SK-N-SH (cell line): ENCODE measurements at regions of chr12 and their contacts with region 1.

Region 1: DNA sequence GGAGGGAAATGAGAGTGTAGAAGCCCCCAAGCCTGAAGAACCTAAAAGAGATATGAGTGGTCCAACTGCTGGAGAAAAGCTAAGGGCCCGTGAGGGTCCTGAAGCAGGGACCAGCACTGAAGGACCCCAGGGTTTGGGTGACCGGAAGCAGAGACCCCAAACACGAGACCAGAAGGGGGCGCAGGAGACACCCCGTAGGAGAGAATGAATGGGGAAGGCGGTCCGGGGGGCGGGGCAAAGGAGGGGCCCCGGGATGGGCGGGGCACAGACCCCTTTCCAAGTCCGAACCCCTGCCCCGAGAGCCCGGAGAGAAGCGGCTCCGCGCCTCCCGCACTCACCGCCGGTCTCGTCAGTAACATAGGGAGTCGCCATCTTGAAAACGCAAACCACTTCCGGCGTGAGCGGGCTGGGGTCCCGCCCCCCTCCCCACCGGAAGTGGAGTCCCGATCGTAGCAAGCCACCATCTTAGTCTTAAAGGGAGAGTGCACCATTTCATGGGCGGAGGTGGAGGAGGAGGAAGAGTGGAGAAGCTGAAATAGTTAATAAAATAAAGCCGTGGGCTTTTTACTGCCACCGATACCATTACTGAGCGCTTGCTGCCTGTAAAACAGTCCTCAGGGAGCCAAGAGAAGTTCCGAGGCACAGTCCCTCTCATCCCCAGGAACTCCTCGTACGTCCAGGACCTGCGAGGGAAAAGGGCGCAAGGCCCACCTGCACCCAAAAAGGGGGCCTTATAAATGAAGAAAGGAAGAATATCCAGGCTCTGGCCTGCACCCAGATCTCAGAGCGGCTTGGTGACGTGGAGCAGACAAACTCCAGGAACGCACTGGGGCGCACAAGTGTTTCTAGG is 731 bp downstream of the PYM1 start:
- DNase-seq: peak; percentile 96
- H3K4me3 ChIP-seq: peak overlapping the region; percentile 90 to 94
- H3K27ac ChIP-seq: peak overlapping the region; percentile 94 to 98
- H3K4me1 ChIP-seq: peaks cover 21 to 28% of the 10 kb centered on the region in 2 experiments; a peak in 3 of 4 replicates
- H3K27me3 ChIP-seq: no peaks in the 10 kb centered on the region
- CTCF ChIP-seq: peak; percentile 97
- EP300 ChIP-seq: no peak
- RAD21 ChIP-seq: no peak; the same call in 1 of the 2 replicates

Region 2: GRCh38 chr12:55728939-55729823 is 197.8 kb before region 1 on chr12 and contains the start of gene CD63:
- CTCF ChIA-PET with region 1: interaction called, 11 read pairs
- POLR2A ChIA-PET with region 1: no interaction called
- DNase-seq: peak; percentile 93
- H3K4me3 ChIP-seq: peak within 1 kb of the TSS; percentile 74 to 97
- H3K27ac ChIP-seq: peak within 1 kb of the TSS; percentile 97 to 100
- H3K4me1 ChIP-seq: peaks cover 0 to 26% of the 10 kb centered on the region in 2 experiments; a peak in 1 of 4 replicates
- H3K27me3 ChIP-seq: no peaks in the 10 kb centered on the region
- CTCF ChIP-seq: no peak
- EP300 ChIP-seq: peak in 1 of 2 experiments; percentile 6; a peak in 1 of 4 replicates
- RAD21 ChIP-seq: no peak
- polyA plus RNA-seq, gene CD63: 1,022 and 1,465 TPM in 2 replicates

Region 3: DNA sequence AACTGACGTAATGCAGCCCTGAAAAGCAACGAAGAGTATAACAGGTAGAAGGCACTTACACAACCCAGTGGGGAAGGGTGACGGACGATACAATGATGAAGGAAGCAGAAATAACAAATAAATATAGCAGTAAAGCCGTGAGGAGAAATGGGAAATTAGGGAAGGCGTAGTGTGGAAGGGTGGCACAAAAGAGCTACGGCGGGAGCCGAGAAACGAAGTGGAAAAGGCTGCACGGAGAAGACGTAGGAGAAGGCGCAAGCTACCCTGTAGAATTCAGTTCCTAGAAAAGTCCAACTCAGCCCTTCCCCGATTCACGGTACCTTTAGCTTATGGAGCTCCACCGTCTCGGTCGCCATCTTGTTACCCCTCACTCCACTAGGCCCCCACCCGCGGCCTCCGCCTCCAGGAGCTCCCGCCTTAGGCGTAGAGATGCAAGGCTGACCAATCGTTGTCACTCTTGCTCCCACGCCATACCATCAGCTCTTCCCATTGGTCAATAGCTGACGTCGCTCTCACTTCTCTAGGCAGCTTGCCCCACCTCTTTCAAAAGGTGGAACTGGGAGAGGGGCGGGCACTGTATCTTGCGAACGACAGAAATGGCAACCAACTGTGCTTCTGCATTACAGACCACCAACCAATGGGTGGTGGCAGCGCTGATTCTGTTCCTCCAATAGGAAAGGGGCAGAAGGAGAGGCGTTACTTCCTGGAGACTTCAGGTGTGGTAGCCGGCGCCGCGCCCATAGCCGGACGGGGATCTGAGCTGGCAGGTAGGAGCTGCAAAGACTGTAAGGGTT is 109.4 kb before region 1 on chr12 and contains the starts of genes ORMDL2 and SARNP:
- CTCF ChIA-PET with region 1: interaction called, 5 read pairs
- POLR2A ChIA-PET with region 1: interaction called, 18 read pairs
- DNase-seq: peak; percentile 91
- H3K4me3 ChIP-seq: peak within 1 kb of the TSS; percentile 87 to 96
- H3K27ac ChIP-seq: peak within 1 kb of the TSS; percentile 76 to 85
- H3K4me1 ChIP-seq: peaks cover 8 to 11% of the 10 kb centered on the region in 2 experiments
- H3K27me3 ChIP-seq: no peaks in the 10 kb centered on the region
- CTCF ChIP-seq: no peak
- EP300 ChIP-seq: no peak
- RAD21 ChIP-seq: no peak
- polyA plus RNA-seq, gene ORMDL2: 35.2 and 37.3 TPM in 2 replicates
- polyA plus RNA-seq, gene SARNP: 65.8 and 66.9 TPM in 2 replicates

Region 4: GRCh38 chr12:55829967-55830600 is 96.9 kb before region 1 on chr12:
- CTCF ChIA-PET with region 1: interaction called, 36 read pairs
- POLR2A ChIA-PET with region 1: interaction called, 39 read pairs
- DNase-seq: peak; percentile 79
- H3K4me3 ChIP-seq: peak overlapping the region; percentile 89 to 92
- H3K27ac ChIP-seq: peak overlapping the region; percentile 84
- H3K4me1 ChIP-seq: peaks cover 4 to 45% of the 10 kb centered on the region in 2 experiments; a peak in 3 of 4 replicates
- H3K27me3 ChIP-seq: no peaks in the 10 kb centered on the region
- CTCF ChIP-seq: no peak
- EP300 ChIP-seq: no peak; a peak in 1 of 4 replicates
- RAD21 ChIP-seq: peak; percentile 39; the same call in 1 of the 2 replicates

Region 5: GRCh38 chr12:55915482-55915859 is 11.5 kb before region 1 on chr12:
- CTCF ChIA-PET with region 1: interaction called, 16 read pairs
- POLR2A ChIA-PET with region 1: interaction called, 3 read pairs
- DNase-seq: no peak
- H3K4me3 ChIP-seq: no peak overlapping the region
- H3K27ac ChIP-seq: no peak overlapping the region
- H3K4me1 ChIP-seq: 0 out of 4 replicates have a peak, but pooled peaks cover 0 to 7% of the 10 kb centered on the region in 2 experiments
- H3K27me3 ChIP-seq: no peaks in the 10 kb centered on the region
- CTCF ChIP-seq: no peak
- EP300 ChIP-seq: no peak
- RAD21 ChIP-seq: no peak

Region 6: DNA sequence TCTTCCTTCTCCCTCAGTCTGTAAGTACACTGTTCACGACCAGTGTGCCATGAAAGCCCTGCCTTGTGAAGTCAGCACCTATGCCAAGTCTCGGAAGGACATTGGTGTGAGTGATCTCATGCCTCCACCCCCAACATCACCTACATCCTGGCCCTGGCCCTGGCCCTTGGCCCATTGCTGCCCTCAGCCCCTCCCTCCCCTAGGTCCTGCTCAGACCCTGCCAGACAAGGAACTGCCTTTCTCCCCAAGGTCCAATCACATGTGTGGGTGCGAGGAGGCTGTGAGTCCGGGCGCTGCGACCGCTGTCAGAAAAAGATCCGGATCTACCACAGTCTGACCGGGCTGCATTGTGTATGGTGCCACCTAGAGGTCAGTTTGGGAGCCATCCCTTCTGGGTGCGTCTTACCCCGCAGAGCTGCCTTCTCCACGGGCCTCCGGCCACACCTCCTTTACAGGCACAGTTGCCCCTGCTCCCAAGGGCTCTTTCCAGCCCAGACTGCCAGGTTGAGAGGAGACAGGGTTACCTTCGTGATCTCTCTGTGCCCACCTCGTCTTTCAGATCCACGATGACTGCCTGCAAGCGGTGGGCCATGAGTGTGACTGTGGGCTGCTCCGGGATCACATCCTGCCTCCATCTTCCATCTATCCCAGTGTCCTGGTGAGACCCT is 13.2 kb after region 1 on chr12:
- CTCF ChIA-PET with region 1: interaction called, 37 read pairs
- POLR2A ChIA-PET with region 1: no interaction called
- DNase-seq: peak; percentile 90
- H3K4me3 ChIP-seq: no peak overlapping the region; a peak in 1 of 4 replicates
- H3K27ac ChIP-seq: peak overlapping the region in 1 of 2 experiments; percentile 2; a peak in 1 of 4 replicates
- H3K4me1 ChIP-seq: peaks cover 0 to 9% of the 10 kb centered on the region in 2 experiments; a peak in 1 of 4 replicates
- H3K27me3 ChIP-seq: no peaks in the 10 kb centered on the region
- CTCF ChIP-seq: peak; percentile 90
- EP300 ChIP-seq: no peak
- RAD21 ChIP-seq: peak; percentile 86

Region 7: DNA sequence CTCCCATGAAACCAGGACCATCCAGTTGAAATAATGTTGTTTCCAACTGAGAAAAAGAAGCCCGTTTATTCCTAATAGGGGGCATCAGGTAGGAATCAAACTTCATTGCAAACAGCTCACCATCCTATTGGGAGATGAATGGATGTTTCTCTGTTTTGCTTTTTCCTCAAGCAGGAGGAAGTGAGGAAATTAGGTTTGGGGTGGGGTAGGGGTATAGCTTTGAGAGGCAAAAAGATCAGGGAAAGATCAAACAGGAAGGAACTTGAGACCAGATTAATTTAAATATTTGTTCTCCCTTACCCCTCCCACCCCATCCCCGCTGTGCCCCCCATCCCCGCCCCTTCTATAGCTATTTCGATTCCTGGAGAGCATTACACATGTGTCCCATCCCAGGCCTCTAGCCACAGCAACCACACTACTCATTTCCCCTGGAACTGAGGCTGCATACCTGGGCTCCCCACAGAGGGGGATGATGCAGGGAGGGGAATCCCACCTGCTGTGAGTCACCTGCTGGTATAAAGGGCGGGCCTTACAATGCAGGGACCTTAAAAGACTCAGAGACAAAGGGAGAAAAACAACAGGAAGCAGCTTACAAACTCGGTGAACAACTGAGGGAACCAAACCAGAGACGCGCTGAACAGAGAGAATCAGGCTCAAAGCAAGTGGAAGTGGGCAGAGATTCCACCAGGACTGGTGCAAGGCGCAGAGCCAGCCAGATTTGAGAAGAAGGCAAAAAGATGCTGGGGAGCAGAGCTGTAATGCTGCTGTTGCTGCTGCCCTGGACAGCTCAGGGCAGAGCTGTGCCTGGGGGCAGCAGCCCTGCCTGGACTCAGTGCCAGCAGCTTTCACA is 411.6 kb after region 1 on chr12 and contains the start of gene IL23A:
- CTCF ChIA-PET with region 1: no interaction called
- POLR2A ChIA-PET with region 1: no interaction called
- DNase-seq: no peak
- H3K4me3 ChIP-seq: no peak within 1 kb of the TSS
- H3K27ac ChIP-seq: no peak within 1 kb of the TSS
- H3K4me1 ChIP-seq: no peaks in the 10 kb centered on the region; a peak in 1 of 4 replicates
- H3K27me3 ChIP-seq: no peaks in the 10 kb centered on the region
- CTCF ChIP-seq: no peak
- EP300 ChIP-seq: no peak
- RAD21 ChIP-seq: no peak
- polyA plus RNA-seq, gene IL23A: 0.29 and 0.46 TPM in 2 replicates